ENCODE measurements at regions of chr11 and their contacts with region 1.

Region 1: GRCh38 chr11:117621226-117621625 is 175.8 kb downstream of the DSCAML1 start:
- DNase-seq: no peak
- H3K4me3 ChIP-seq: no peak overlapping the region
- H3K27ac ChIP-seq: no peak overlapping the region
- H3K27me3 ChIP-seq: peaks cover 2% of the 10 kb centered on the region
- CTCF ChIP-seq: peak; percentile 59

Region 2: DNA sequence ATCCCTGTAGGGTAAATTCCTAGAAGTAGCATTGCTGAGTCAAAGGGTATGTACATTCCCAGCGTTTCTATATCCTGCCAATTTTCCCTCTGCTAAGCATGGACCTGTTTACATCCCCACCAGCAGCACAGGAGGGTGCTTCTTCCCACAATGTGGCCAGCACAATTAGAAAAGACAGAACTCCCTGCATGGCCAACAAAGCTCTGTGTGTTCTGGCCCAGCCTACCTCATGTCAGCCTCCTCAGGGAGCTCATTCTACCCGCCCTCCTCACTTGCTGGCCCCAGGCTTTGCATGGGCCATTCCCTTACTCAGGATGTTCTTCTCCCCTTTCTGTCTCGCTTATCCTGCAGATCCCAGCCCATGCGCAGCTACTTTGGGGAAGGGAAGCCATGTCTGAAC is 10.3 kb before region 1 on chr11:
- CTCF ChIA-PET with region 1: interaction called, 10 read pairs
- POLR2A ChIA-PET with region 1: no interaction called
- DNase-seq: no peak
- H3K4me3 ChIP-seq: no peak overlapping the region
- H3K27ac ChIP-seq: no peak overlapping the region
- H3K27me3 ChIP-seq: peaks cover 15% of the 10 kb centered on the region
- CTCF ChIP-seq: no peak

Measured in AG04450 (cell line).